ENCODE measurements at regions of chr2 and their contacts with region 1.

Region 1: GRCh38 chr2:33380001-33380609 is 96.3 kb upstream of the RASGRP3 start:
- DNase-seq: no peak
- H3K4me3 ChIP-seq: no peak overlapping the region
- H3K27ac ChIP-seq: no peak overlapping the region
- H3K4me1 ChIP-seq: peaks cover 0 to 31% (median 22%) of the 10 kb centered on the region in 4 donors
- H3K27me3 ChIP-seq: no peaks in the 10 kb centered on the region
- CTCF ChIP-seq: peak in 2 of 3 experiments; percentile 23 to 45
- EP300 ChIP-seq: no peak
- POLR2A ChIP-seq: no peak

Region 2: DNA sequence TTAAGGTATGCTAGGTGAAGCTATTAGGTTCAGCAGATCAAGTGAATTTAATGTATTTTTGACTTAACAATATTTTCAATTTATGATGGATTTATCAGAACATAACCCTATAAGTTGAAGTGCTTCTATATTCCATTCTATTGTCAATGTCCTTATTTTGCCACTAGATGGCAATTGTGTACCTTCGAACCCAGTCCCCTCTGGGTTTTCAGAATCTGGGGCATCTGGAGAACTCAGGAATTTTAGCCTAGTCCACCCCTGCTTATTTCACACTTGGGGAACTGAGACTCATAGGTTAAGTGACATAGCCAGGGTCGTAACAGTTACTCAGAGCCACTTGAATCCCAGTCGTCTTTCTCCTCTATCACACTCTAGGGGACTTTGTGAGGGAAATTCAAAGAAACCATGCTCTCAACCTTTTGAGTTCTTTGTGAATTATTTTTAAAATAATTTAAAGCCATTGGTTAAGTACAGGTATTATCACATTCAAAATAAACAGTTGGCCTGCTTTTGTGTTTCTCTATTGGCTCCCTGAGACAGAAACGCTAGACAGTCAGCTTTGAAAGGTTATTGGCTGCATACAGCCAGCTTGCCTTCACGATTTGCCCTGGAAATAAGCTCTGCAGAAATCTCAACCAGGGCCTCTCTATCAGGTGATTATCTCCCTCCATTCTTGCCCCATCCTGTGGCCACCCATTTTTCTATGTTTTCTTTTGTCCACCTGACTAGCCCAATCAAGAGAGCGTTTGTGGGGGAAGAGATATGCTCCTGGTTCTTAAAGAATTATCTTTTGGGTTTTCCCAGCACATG is 607.3 kb before region 1 on chr2:
- intact Hi-C with region 1: loop called (anchors 10 kb)
- DNase-seq: no peak
- H3K4me3 ChIP-seq: no peak overlapping the region
- H3K27ac ChIP-seq: peak overlapping the region in 3 of 4 donors; percentile 12 to 35 (median 13)
- H3K4me1 ChIP-seq: peaks cover 10 to 14% (median 11%) of the 10 kb centered on the region in 4 donors
- H3K27me3 ChIP-seq: no peaks in the 10 kb centered on the region
- CTCF ChIP-seq: peak; percentile 71 to 81 (median 74)
- EP300 ChIP-seq: no peak
- POLR2A ChIP-seq: no peak

Region 3: GRCh38 chr2:33632831-33633230 is 252.7 kb after region 1 on chr2:
- intact Hi-C with region 1: no loop called
- DNase-seq: peak; percentile 29
- H3K4me3 ChIP-seq: no peak overlapping the region
- H3K27ac ChIP-seq: no peak overlapping the region
- H3K4me1 ChIP-seq: no peaks in the 10 kb centered on the region
- H3K27me3 ChIP-seq: no peaks in the 10 kb centered on the region
- CTCF ChIP-seq: no peak
- EP300 ChIP-seq: no peak
- POLR2A ChIP-seq: no peak